SK-N-SH (cell line): ENCODE measurements at regions of chr4 and their contacts with region 1.

Region 1: GRCh38 chr4:742742-743311 is 37.2 kb downstream of the PCGF3 start:
- DNase-seq: peak; percentile 93
- H3K4me3 ChIP-seq: no peak overlapping the region; a peak in 1 of 4 replicates
- H3K27ac ChIP-seq: no peak overlapping the region; a peak in 1 of 4 replicates
- H3K4me1 ChIP-seq: no peaks in the 10 kb centered on the region
- H3K27me3 ChIP-seq: no peaks in the 10 kb centered on the region
- CTCF ChIP-seq: peak; percentile 91
- EP300 ChIP-seq: no peak
- RAD21 ChIP-seq: peak; percentile 78

Region 2: DNA sequence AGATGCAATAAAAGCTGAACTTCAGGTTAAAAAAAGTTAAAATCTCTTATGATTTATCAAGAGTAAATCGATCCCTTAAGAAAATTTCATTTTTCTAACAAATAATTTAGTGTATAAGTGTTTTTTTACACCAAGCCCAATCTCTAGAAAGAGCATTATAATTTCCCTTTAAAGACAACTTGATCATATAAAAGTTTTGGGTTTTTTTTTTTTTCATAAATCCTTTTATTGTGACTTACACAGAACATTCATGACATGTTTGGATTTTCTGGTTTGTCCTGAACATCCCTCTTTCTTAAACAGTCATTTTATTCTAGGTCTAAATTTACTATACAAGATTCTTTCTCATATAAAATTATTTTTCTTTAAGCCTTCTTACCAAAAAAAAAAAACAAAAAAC is 250.4 kb before region 1 on chr4:
- CTCF ChIA-PET with region 1: no interaction called
- POLR2A ChIA-PET with region 1: no interaction called
- DNase-seq: no peak
- H3K4me3 ChIP-seq: no peak overlapping the region
- H3K27ac ChIP-seq: no peak overlapping the region
- H3K4me1 ChIP-seq: no peaks in the 10 kb centered on the region
- H3K27me3 ChIP-seq: no peaks in the 10 kb centered on the region
- CTCF ChIP-seq: no peak
- EP300 ChIP-seq: no peak
- RAD21 ChIP-seq: no peak

Region 3: GRCh38 chr4:717601-718320 is 25.1 kb before region 1 on chr4:
- CTCF ChIA-PET with region 1: interaction called, 14 read pairs
- POLR2A ChIA-PET with region 1: no interaction called
- DNase-seq: no peak
- H3K4me3 ChIP-seq: no peak overlapping the region
- H3K27ac ChIP-seq: no peak overlapping the region
- H3K4me1 ChIP-seq: peaks cover 0 to 2% of the 10 kb centered on the region in 2 experiments; a peak in 1 of 4 replicates
- H3K27me3 ChIP-seq: no peaks in the 10 kb centered on the region
- CTCF ChIP-seq: no peak
- EP300 ChIP-seq: no peak
- RAD21 ChIP-seq: no peak

Region 4: DNA sequence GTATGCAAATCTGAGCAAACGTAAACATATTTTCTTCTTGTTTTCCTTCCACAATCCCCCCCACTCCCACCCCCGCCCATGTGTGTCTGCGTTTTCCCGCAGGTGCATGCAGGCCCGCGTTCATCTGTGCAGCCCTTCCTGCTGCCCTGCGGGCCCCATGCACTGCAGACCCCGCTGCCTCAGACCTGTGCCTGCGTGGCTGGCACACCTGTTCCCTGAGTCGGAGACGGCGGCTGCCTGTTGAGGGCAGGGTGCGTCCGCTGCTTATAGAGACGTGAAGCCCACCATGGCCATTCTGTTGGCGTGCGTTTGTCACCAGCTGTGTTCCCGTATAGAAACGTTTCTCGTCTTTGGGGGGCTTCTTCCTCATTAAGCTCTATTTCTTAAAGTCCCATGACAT is 14.3 kb after region 1 on chr4:
- CTCF ChIA-PET with region 1: interaction called, 26 read pairs
- POLR2A ChIA-PET with region 1: no interaction called
- DNase-seq: no peak
- H3K4me3 ChIP-seq: no peak overlapping the region
- H3K27ac ChIP-seq: no peak overlapping the region
- H3K4me1 ChIP-seq: peaks cover 0 to under 1% of the 10 kb centered on the region in 2 experiments; a peak in 1 of 4 replicates
- H3K27me3 ChIP-seq: no peaks in the 10 kb centered on the region
- CTCF ChIP-seq: no peak
- EP300 ChIP-seq: no peak
- RAD21 ChIP-seq: no peak

Region 5: DNA sequence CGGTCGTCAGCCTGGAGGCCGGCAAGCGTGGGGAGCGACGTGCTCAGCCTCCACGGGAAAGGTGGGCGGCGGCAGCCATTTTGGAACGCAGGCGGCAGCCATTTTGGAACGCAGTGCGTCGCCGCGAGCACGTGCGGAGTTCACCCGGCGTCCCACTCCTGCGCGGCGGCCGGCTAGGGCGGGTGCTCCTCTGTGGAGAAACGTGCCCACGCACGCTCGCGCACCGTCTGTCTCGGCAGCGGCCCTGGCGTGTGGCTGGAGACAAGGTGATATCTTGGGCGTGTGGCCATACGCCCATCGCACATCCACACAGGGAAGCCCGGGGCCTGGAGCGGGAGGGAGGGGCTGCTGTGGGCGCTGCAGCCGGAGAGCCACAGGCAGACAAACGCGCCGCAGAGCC is 62.0 kb after region 1 on chr4:
- CTCF ChIA-PET with region 1: no interaction called
- POLR2A ChIA-PET with region 1: no interaction called
- DNase-seq: no peak
- H3K4me3 ChIP-seq: no peak overlapping the region
- H3K27ac ChIP-seq: no peak overlapping the region
- H3K4me1 ChIP-seq: no peaks in the 10 kb centered on the region
- H3K27me3 ChIP-seq: no peaks in the 10 kb centered on the region
- CTCF ChIP-seq: no peak
- EP300 ChIP-seq: no peak
- RAD21 ChIP-seq: no peak

Region 6: GRCh38 chr4:891747-892146 is 148.9 kb after region 1 on chr4:
- CTCF ChIA-PET with region 1: interaction called, 11 read pairs
- POLR2A ChIA-PET with region 1: no interaction called
- DNase-seq: peak; percentile 61
- H3K4me3 ChIP-seq: no peak overlapping the region; a peak in 1 of 4 replicates
- H3K27ac ChIP-seq: no peak overlapping the region
- H3K4me1 ChIP-seq: no peaks in the 10 kb centered on the region
- H3K27me3 ChIP-seq: no peaks in the 10 kb centered on the region
- CTCF ChIP-seq: 0 out of 2 replicates have a peak, but pooled peaks have one; percentile 20
- EP300 ChIP-seq: no peak
- RAD21 ChIP-seq: peak; percentile 29; the same call in 1 of the 2 replicates